CD8-positive, alpha-beta T cell (primary cell): ENCODE measurements at regions of chr17 and their contacts with region 1.

Region 1: DNA sequence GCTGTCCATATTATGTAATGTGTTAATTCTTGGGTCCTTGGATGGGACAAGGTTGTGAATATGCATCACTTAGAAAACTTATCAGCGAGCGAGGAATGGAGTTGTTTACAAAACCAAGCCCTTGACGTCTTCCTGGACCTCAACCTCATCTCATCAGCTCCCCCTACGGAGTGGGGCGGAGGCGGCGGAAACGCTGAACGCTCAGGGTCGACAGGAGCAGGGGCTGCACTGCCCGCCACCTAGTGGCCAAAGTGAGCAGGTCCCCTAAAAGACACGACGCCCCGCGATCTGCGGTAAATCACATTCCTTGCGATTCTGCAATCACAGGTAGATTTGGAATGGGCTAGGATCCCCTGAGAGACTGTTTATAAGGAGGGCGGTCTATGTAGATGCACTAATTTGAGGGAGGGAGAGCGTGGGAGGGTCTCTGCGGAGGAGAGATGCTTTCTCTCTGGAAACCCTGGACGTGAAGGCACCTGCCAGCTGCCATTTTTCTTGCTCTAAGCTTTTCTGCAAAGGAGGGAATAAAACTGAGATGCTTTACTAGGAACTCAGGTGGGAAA is 5.4 kb upstream of the ICAM2 start:
- DNase-seq: peak; percentile 85 to 98 (median 94)
- ATAC-seq: peak; percentile 84
- H3K4me3 ChIP-seq: peak overlapping the region; percentile 19 to 37
- H3K4me3 Mint-ChIP-seq: peak overlapping the region; percentile 80
- H3K27ac ChIP-seq: peak overlapping the region; percentile 68 to 92
- H3K27ac Mint-ChIP-seq: peak overlapping the region; percentile 98
- H3K4me1 ChIP-seq: peaks cover 53% of the 10 kb centered on the region
- H3K4me1 Mint-ChIP-seq: peaks cover 58% of the 10 kb centered on the region
- H3K27me3 ChIP-seq: no peaks in the 10 kb centered on the region
- H3K27me3 Mint-ChIP-seq: no peaks in the 10 kb centered on the region
- CTCF ChIP-seq: peak; percentile 94

Region 2: GRCh38 chr17:63751806-63752205 is 274.0 kb before region 1 on chr17:
- CTCF ChIA-PET with region 1: no interaction called
- POLR2A ChIA-PET with region 1: no interaction called
- intact Hi-C with region 1: no loop called
- DNase-seq: peak in 6 of 9 experiments; percentile 7 to 61 (median 33)
- ATAC-seq: peak; percentile 72
- H3K4me3 ChIP-seq: no peak overlapping the region
- H3K4me3 Mint-ChIP-seq: peak overlapping the region; percentile 40
- H3K27ac ChIP-seq: peak overlapping the region in 1 of 2 experiments; percentile 49
- H3K27ac Mint-ChIP-seq: peak overlapping the region; percentile 82
- H3K4me1 ChIP-seq: peaks cover 9% of the 10 kb centered on the region
- H3K4me1 Mint-ChIP-seq: peaks cover 10% of the 10 kb centered on the region
- H3K27me3 ChIP-seq: no peaks in the 10 kb centered on the region
- H3K27me3 Mint-ChIP-seq: no peaks in the 10 kb centered on the region
- CTCF ChIP-seq: no peak

Region 3: GRCh38 chr17:63931099-63931561 is 94.7 kb before region 1 on chr17:
- CTCF ChIA-PET with region 1: interaction called, 25 read pairs
- POLR2A ChIA-PET with region 1: interaction called, 9 read pairs
- intact Hi-C with region 1: no loop called
- DNase-seq: peak in 8 of 9 experiments; percentile 53 to 79 (median 66)
- ATAC-seq: peak; percentile 81
- H3K4me3 ChIP-seq: peak overlapping the region; percentile 48 to 58
- H3K4me3 Mint-ChIP-seq: peak overlapping the region; percentile 93
- H3K27ac ChIP-seq: peak overlapping the region; percentile 36 to 50
- H3K27ac Mint-ChIP-seq: peak overlapping the region; percentile 94
- H3K4me1 ChIP-seq: peaks cover 20% of the 10 kb centered on the region
- H3K4me1 Mint-ChIP-seq: peaks cover 27% of the 10 kb centered on the region
- H3K27me3 ChIP-seq: no peaks in the 10 kb centered on the region
- H3K27me3 Mint-ChIP-seq: no peaks in the 10 kb centered on the region
- CTCF ChIP-seq: no peak

Region 4: GRCh38 chr17:63984651-63985386 is 41.0 kb before region 1 on chr17:
- CTCF ChIA-PET with region 1: interaction called, 293 read pairs
- POLR2A ChIA-PET with region 1: interaction called, 12 read pairs
- intact Hi-C with region 1: loop called (anchors 1 kb)
- DNase-seq: peak in 7 of 9 experiments; percentile 29 to 85 (median 65)
- ATAC-seq: peak; percentile 94
- H3K4me3 ChIP-seq: no peak overlapping the region
- H3K4me3 Mint-ChIP-seq: no peak overlapping the region
- H3K27ac ChIP-seq: peak overlapping the region in 1 of 2 experiments; percentile 52
- H3K27ac Mint-ChIP-seq: peak overlapping the region; percentile 33
- H3K4me1 ChIP-seq: peaks cover 7% of the 10 kb centered on the region
- H3K4me1 Mint-ChIP-seq: peaks cover 21% of the 10 kb centered on the region
- H3K27me3 ChIP-seq: no peaks in the 10 kb centered on the region
- H3K27me3 Mint-ChIP-seq: no peaks in the 10 kb centered on the region
- CTCF ChIP-seq: no peak

Region 5: DNA sequence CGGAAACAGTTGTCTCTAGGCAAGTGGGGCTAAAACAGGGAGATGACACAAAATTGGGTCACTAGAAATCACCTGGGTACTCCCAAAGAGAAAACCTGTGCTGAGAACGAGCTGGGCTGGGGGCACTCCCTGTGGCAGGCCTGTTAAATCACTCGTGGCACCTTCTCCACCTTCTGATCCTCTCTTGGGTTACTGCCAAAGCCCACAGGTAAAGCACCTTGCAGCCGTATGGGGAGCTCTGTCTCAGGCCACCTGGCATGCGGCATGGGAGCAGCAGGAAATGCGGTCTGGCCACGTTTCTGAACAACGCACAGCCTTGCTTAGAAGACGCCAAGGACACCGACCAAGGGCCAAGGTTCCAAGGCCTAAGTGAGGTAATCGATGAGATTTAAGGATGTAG is 16.1 kb after region 1 on chr17:
- CTCF ChIA-PET with region 1: interaction called, 155 read pairs
- POLR2A ChIA-PET with region 1: interaction called, 3 read pairs
- intact Hi-C with region 1: no loop called
- DNase-seq: no peak
- ATAC-seq: no peak
- H3K4me3 ChIP-seq: no peak overlapping the region
- H3K4me3 Mint-ChIP-seq: no peak overlapping the region
- H3K27ac ChIP-seq: no peak overlapping the region
- H3K27ac Mint-ChIP-seq: peak overlapping the region; percentile 74
- H3K4me1 ChIP-seq: no peaks in the 10 kb centered on the region
- H3K4me1 Mint-ChIP-seq: peaks cover 9% of the 10 kb centered on the region
- H3K27me3 ChIP-seq: no peaks in the 10 kb centered on the region
- H3K27me3 Mint-ChIP-seq: no peaks in the 10 kb centered on the region
- CTCF ChIP-seq: no peak

Region 6: GRCh38 chr17:64063766-64064224 is 38.0 kb after region 1 on chr17:
- CTCF ChIA-PET with region 1: interaction called, 66 read pairs
- POLR2A ChIA-PET with region 1: interaction called, 4 read pairs
- intact Hi-C with region 1: no loop called
- DNase-seq: peak; percentile 20 to 73 (median 56)
- ATAC-seq: peak; percentile 54
- H3K4me3 ChIP-seq: no peak overlapping the region
- H3K4me3 Mint-ChIP-seq: peak overlapping the region; percentile 76
- H3K27ac ChIP-seq: peak overlapping the region in 1 of 2 experiments; percentile 58
- H3K27ac Mint-ChIP-seq: peak overlapping the region; percentile 86
- H3K4me1 ChIP-seq: peaks cover 32% of the 10 kb centered on the region
- H3K4me1 Mint-ChIP-seq: peaks cover 75% of the 10 kb centered on the region
- H3K27me3 ChIP-seq: no peaks in the 10 kb centered on the region
- H3K27me3 Mint-ChIP-seq: no peaks in the 10 kb centered on the region
- CTCF ChIP-seq: peak; percentile 33

Region 7: GRCh38 chr17:64262417-64263260 is 236.8 kb after region 1 on chr17 and contains the start of gene TEX2:
- CTCF ChIA-PET with region 1: no interaction called
- POLR2A ChIA-PET with region 1: interaction called, 3 read pairs
- intact Hi-C with region 1: loop called (anchors 5 kb)
- DNase-seq: peak; percentile 39 to 87 (median 67)
- ATAC-seq: peak; percentile 32
- H3K4me3 ChIP-seq: peak within 1 kb of the TSS; percentile 64 to 82
- H3K4me3 Mint-ChIP-seq: peak within 1 kb of the TSS; percentile 89
- H3K27ac ChIP-seq: peak within 1 kb of the TSS; percentile 67 to 74
- H3K27ac Mint-ChIP-seq: peak within 1 kb of the TSS; percentile 93
- H3K4me1 ChIP-seq: peaks cover 21% of the 10 kb centered on the region
- H3K4me1 Mint-ChIP-seq: peaks cover 37% of the 10 kb centered on the region
- H3K27me3 ChIP-seq: no peaks in the 10 kb centered on the region
- H3K27me3 Mint-ChIP-seq: no peaks in the 10 kb centered on the region
- CTCF ChIP-seq: no peak
- total RNA-seq, gene TEX2: 4.8 to 5.6 TPM